Sigmoid colon (tissue), 7 donors: ENCODE measurements at regions of chr10 and their contacts with region 1.

Region 1: GRCh38 chr10:93702211-93703001 is at the start of gene FRA10AC1:
- DNase-seq: peak; percentile 98
- H3K4me3 ChIP-seq: peak within 1 kb of the TSS; percentile 58 to 70 (median 65)
- H3K27ac ChIP-seq: peak within 1 kb of the TSS; percentile 85 to 93 (median 89)
- H3K4me1 ChIP-seq: peaks cover 0 to 26% (median 11%) of the 10 kb centered on the region in 4 donors
- H3K27me3 ChIP-seq: no peaks in the 10 kb centered on the region
- CTCF ChIP-seq: peak; percentile 25 to 79 (median 42)
- EP300 ChIP-seq: peak in 1 of 4 donors; percentile 44
- POLR2A ChIP-seq: peak; percentile 19 to 21
- total RNA-seq, gene FRA10AC1: 11.3 to 23.5 (median 17.3) TPM

Region 2: DNA sequence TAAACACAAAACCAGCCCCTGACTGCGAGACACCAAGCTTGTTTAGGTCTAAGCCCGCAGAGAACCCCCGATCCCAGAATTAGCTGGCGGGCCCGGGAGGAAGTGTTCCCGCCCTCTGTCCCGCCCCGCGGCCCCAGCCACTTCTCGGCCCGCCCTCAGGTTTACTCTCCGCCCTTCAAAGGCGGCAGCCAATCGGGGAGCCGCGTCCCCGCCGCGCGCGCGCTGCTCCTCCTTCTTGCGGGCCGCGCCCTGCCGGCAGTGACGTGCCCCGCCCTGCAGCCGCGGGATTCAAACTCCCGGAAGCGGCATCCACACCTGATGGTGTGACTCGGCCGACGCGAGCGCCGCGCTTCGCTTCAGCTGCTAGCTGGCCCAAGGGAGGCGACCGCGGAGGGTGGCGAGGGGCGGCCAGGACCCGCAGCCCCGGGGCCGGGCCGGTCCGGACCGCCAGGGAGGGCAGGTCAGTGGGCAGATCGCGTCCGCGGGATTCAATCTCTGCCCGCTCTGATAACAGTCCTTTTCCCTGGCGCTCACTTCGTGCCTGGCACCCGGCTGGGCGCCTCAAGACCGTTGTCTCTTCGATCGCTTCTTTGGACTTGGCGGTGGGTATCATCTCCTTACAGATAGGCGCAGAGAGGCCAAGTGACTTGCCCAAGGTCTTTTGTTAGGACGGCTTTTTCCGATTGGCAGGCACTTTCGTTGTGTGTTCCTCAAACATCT is 205.9 kb before region 1 on chr10 and contains the start of gene CEP55:
- intact Hi-C with region 1: no loop called
- DNase-seq: peak; percentile 96
- H3K4me3 ChIP-seq: peak within 1 kb of the TSS; percentile 32 to 66 (median 59)
- H3K27ac ChIP-seq: peak within 1 kb of the TSS; percentile 53 to 72 (median 70)
- H3K4me1 ChIP-seq: peaks cover 0 to 14% (median 8%) of the 10 kb centered on the region in 4 donors
- H3K27me3 ChIP-seq: no peaks in the 10 kb centered on the region
- CTCF ChIP-seq: no peak
- EP300 ChIP-seq: no peak
- POLR2A ChIP-seq: no peak
- total RNA-seq, gene CEP55: 1.4 to 1.5 TPM in 2 of 4 donors, not detected in the others

Region 3: DNA sequence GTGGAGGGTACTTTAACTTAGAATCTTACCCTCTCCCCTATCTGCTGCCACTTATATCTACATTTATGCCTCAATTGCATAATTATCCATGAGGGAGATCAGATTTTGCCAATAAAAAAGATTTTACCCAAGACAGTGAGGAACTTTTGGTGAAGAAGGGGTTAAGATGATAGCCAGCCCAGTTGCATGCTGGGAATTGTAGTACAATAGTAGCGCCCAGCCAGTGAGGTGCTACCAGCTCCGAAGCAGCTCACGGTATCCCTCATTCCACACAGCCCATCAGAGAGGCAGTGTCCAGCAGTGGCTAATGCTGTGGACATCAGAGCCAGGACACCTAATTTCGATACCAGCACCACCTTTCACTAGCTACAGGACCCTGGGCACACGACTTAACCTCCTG is 49.4 kb after region 1 on chr10:
- intact Hi-C with region 1: loop called (anchors 2 kb)
- DNase-seq: no peak
- H3K4me3 ChIP-seq: peak overlapping the region in 3 of 4 donors; percentile 10 to 32 (median 20)
- H3K27ac ChIP-seq: peak overlapping the region in 2 of 4 donors; percentile 28 to 32
- H3K4me1 ChIP-seq: peaks cover 0 to 79% (median 47%) of the 10 kb centered on the region in 4 donors
- H3K27me3 ChIP-seq: no peaks in the 10 kb centered on the region
- CTCF ChIP-seq: no peak
- EP300 ChIP-seq: no peak
- POLR2A ChIP-seq: no peak

Region 4: DNA sequence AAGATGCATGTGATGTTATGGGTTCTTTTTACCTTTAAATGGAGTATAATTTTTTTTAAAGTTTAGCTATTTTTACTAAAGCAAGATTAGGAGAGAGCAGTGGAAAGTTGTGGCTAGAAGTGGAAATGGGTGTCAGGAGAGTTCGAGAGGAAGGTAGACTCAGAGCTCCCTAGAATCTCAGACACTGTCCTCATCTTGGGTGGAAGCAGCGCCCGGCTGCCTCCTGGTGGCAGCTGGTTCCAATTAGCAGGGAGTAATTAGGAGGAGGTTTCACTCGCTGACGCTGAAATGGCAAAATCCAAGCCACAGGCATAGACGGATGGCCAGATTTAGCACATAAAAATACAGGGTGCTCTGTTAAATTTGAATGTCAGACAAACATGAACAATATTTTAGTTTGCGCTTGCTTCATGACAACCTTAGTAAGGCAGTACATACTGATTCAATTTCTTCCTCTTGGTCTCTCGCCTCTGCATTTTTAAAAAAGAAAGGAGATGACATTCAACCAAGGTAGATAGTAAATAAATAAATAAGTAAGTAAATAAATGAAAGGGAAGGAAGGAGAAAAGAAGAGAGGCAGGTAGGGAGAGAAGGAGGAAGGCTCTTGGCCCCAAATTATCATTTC is 113.8 kb after region 1 on chr10:
- intact Hi-C with region 1: loop called (anchors 1 kb)
- DNase-seq: peak; percentile 78
- H3K4me3 ChIP-seq: peak overlapping the region in 1 of 4 donors; percentile 18
- H3K27ac ChIP-seq: peak overlapping the region in 1 of 4 donors; percentile 25
- H3K4me1 ChIP-seq: peaks cover 0 to 6% (median 2%) of the 10 kb centered on the region in 4 donors
- H3K27me3 ChIP-seq: no peaks in the 10 kb centered on the region
- CTCF ChIP-seq: peak; percentile 65 to 75 (median 74)
- EP300 ChIP-seq: no peak
- POLR2A ChIP-seq: no peak

Region 5: GRCh38 chr10:93893646-93894515 is 191.5 kb after region 1 on chr10 and contains the start of gene SLC35G1:
- intact Hi-C with region 1: loop called (anchors 2 kb)
- DNase-seq: peak; percentile 78
- H3K4me3 ChIP-seq: peak within 1 kb of the TSS; percentile 67 to 86 (median 70)
- H3K27ac ChIP-seq: peak within 1 kb of the TSS; percentile 65 to 71 (median 68)
- H3K4me1 ChIP-seq: peaks cover 0 to 17% (median 11%) of the 10 kb centered on the region in 4 donors
- H3K27me3 ChIP-seq: no peaks in the 10 kb centered on the region
- CTCF ChIP-seq: no peak
- EP300 ChIP-seq: no peak
- POLR2A ChIP-seq: peak in 1 of 2 donors; percentile 22
- total RNA-seq, gene SLC35G1: 2.2 to 6.0 (median 4.2) TPM

Region 6: GRCh38 chr10:94362360-94363250 is 660.2 kb after region 1 on chr10 and contains the start of gene NOC3L:
- intact Hi-C with region 1: loop called (anchors 10 kb)
- DNase-seq: peak; percentile 97
- H3K4me3 ChIP-seq: peak within 1 kb of the TSS; percentile 57 to 74 (median 65)
- H3K27ac ChIP-seq: peak within 1 kb of the TSS; percentile 75 to 83 (median 76)
- H3K4me1 ChIP-seq: peaks cover 0 to 23% (median 16%) of the 10 kb centered on the region in 4 donors
- H3K27me3 ChIP-seq: no peaks in the 10 kb centered on the region
- CTCF ChIP-seq: peak; percentile 68 to 87 (median 81)
- EP300 ChIP-seq: no peak
- POLR2A ChIP-seq: no peak
- total RNA-seq, gene NOC3L: 14.1 to 17.8 (median 15.9) TPM